Natural killer cell (primary cell): ENCODE measurements at regions of chr5 and their contacts with region 1.

Region 1: DNA sequence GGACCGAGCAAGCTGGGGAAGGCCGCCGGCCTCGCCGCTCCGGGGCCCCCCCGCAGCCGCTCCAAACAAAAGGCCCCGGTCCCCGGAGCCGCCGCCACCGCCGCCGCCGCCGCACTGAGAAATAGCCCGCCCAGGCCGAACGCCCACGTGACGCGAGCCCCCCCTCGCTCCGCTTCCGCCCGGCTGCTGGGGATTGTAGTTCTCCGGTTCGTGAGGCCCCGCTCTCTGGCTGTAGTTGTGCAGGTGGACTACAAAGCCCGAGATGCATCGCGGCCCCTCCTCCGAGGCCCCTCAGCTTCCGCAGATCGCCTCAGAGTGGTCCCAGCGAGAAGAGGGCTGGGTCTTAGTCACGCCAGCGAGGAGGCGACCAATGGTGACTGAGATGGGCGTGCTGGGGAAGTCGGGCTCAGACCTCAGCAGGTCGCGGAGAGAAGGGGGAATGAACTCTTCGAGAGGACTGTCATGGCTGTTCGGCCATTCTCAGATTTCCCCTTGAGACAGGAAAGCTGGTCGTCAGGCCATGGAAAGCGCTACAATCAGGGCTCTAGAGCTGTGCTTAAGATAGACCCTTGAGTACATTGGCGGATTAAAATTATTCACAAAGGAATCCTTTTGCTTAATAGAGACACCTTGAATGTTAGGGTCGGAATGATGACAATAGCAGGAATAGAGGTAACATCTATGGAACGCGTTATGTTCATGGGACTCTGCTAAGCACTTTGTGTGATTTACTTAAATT is 489 bp upstream of the PANK3 start:
- DNase-seq: peak; percentile 96 to 98
- ATAC-seq: peak; percentile 93 to 98 (median 93)
- H3K4me3 ChIP-seq: peak overlapping the region; percentile 48
- H3K4me3 Mint-ChIP-seq: peak overlapping the region; percentile 93
- H3K27ac ChIP-seq: peak overlapping the region; percentile 94
- H3K27ac Mint-ChIP-seq: peak overlapping the region; percentile 95 to 99
- H3K4me1 ChIP-seq: peaks cover 22% of the 10 kb centered on the region
- H3K4me1 Mint-ChIP-seq: peaks cover 45 to 48% of the 10 kb centered on the region in 2 donors
- H3K27me3 ChIP-seq: no peaks in the 10 kb centered on the region
- H3K27me3 Mint-ChIP-seq: peaks cover 0 to 7% of the 10 kb centered on the region in 2 donors
- CTCF ChIP-seq: no peak

Region 2: DNA sequence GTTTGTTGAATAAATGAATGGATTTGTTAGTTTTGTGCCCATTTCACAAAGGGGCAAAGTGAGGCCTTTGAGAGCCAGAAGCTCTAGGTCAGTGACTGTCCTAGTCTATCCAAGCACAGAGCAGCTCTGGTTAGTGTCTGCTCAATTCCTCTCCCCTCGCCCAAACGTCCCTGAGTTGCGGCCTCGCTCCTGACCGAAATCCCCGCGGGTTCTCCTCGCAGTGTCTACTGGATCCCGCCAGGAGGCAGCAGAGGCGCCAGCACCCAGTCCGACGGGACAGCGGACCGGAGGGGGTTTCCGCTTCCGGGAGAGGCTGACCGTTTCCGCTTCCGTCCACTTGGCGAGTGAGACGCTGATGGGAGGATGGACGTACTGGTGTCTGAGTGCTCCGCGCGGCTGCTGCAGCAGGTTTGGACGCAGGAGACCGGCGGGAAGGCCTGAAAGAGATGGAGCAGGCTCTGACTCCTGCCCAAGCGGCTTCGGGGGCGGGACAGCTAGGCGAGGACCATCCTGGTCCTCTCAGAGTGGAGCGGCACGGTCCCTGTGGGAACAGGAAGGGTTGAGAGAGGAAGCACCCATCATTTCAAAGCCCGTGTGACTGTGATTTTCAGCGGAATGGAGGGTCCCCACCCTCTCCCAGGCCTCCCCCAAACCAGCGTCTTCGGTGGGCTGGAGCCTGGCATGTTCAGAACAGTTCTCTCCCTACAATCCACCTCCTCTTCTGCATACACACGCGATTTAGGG is 93.3 kb before region 1 on chr5 and contains the start of gene RARS1:
- intact Hi-C with region 1: loop called (anchors 1 kb)
- DNase-seq: peak; percentile 82 to 95
- ATAC-seq: peak; percentile 96 to 97 (median 96)
- H3K4me3 ChIP-seq: peak within 1 kb of the TSS; percentile 72
- H3K4me3 Mint-ChIP-seq: peak within 1 kb of the TSS; percentile 100
- H3K27ac ChIP-seq: peak within 1 kb of the TSS; percentile 15
- H3K27ac Mint-ChIP-seq: peak within 1 kb of the TSS; percentile 93
- H3K4me1 ChIP-seq: peaks cover 9% of the 10 kb centered on the region
- H3K4me1 Mint-ChIP-seq: peaks cover 23% of the 10 kb centered on the region in 2 donors
- H3K27me3 ChIP-seq: no peaks in the 10 kb centered on the region
- H3K27me3 Mint-ChIP-seq: no peaks in the 10 kb centered on the region
- CTCF ChIP-seq: peak; percentile 92
- total RNA-seq, gene RARS1: 51.0 to 53.2 (median 52.5) TPM

Region 3: GRCh38 chr5:168612996-168613395 is 33.3 kb after region 1 on chr5:
- intact Hi-C with region 1: loop called (anchors 2 kb)
- DNase-seq: peak in 1 of 2 donors; percentile 70
- ATAC-seq: peak; percentile 91 to 100 (median 100)
- H3K4me3 ChIP-seq: no peak overlapping the region
- H3K4me3 Mint-ChIP-seq: peak overlapping the region; percentile 61
- H3K27ac ChIP-seq: peak overlapping the region; percentile 53
- H3K27ac Mint-ChIP-seq: peak overlapping the region; percentile 78 to 83
- H3K4me1 ChIP-seq: peaks cover 5% of the 10 kb centered on the region
- H3K4me1 Mint-ChIP-seq: peaks cover 9 to 10% of the 10 kb centered on the region in 2 donors
- H3K27me3 ChIP-seq: no peaks in the 10 kb centered on the region
- H3K27me3 Mint-ChIP-seq: peaks cover 0 to 3% of the 10 kb centered on the region in 2 donors
- CTCF ChIP-seq: no peak

Region 4: DNA sequence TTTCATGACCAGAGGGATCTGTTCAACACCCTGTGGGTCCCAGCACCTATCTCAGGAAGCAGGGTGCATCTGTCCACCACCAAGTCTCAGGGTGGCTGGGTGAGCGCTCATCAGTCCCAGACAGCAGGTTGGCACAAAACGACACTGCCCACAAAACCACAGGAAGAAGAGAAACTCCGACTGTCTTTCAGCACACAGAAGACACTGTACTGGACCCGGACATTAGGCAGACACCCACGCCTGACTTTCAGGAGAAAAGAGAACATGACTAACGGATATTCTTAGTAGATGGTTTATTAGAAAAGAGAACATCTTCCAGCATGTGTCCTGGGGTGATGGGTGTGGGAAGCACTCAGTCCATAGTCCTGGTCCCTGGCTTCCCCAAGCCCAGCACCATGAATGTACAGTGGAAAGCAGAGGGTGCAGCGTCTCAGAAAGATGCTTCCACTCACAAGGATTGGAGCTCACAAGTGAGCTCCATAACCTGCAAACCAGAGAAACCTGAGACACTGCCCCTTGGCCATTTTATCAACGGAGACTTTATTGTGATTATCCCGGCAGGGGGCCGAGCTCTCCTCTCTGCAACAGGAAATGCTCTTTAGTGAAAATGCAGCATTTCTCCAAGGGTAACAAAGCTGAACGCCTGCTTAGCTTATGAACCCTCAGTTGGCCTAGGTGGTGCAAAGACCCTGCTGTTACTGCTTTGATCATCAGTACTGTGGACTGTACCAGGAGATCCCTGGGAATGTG is 1753.7 kb after region 1 on chr5:
- intact Hi-C with region 1: loop called (anchors 5 kb)
- DNase-seq: peak; percentile 49 to 85
- ATAC-seq: peak; percentile 32 to 63 (median 62)
- H3K4me3 ChIP-seq: no peak overlapping the region
- H3K4me3 Mint-ChIP-seq: peak overlapping the region; percentile 63
- H3K27ac ChIP-seq: peak overlapping the region; percentile 88
- H3K27ac Mint-ChIP-seq: no peak overlapping the region
- H3K4me1 ChIP-seq: peaks cover 81% of the 10 kb centered on the region
- H3K4me1 Mint-ChIP-seq: peaks cover 10 to 36% of the 10 kb centered on the region in 2 donors
- H3K27me3 ChIP-seq: no peaks in the 10 kb centered on the region
- H3K27me3 Mint-ChIP-seq: no peaks in the 10 kb centered on the region
- CTCF ChIP-seq: no peak